ENCODE measurements at regions of chr19 and their contacts with region 1.

Region 1: GRCh38 chr19:47013041-47013517 is 6.6 kb upstream of the NPAS1 start:
- DNase-seq: peak; percentile 35 to 80 (median 58)
- ATAC-seq: peak; percentile 92
- H3K4me3 ChIP-seq: no peak overlapping the region
- H3K4me3 Mint-ChIP-seq: no peak overlapping the region
- H3K27ac ChIP-seq: no peak overlapping the region
- H3K27ac Mint-ChIP-seq: no peak overlapping the region
- H3K4me1 ChIP-seq: peaks cover 8% of the 10 kb centered on the region
- H3K4me1 Mint-ChIP-seq: peaks cover 8% of the 10 kb centered on the region
- H3K27me3 ChIP-seq: no peaks in the 10 kb centered on the region
- H3K27me3 Mint-ChIP-seq: peaks cover 10% of the 10 kb centered on the region
- CTCF ChIP-seq: peak; percentile 99

Region 2: DNA sequence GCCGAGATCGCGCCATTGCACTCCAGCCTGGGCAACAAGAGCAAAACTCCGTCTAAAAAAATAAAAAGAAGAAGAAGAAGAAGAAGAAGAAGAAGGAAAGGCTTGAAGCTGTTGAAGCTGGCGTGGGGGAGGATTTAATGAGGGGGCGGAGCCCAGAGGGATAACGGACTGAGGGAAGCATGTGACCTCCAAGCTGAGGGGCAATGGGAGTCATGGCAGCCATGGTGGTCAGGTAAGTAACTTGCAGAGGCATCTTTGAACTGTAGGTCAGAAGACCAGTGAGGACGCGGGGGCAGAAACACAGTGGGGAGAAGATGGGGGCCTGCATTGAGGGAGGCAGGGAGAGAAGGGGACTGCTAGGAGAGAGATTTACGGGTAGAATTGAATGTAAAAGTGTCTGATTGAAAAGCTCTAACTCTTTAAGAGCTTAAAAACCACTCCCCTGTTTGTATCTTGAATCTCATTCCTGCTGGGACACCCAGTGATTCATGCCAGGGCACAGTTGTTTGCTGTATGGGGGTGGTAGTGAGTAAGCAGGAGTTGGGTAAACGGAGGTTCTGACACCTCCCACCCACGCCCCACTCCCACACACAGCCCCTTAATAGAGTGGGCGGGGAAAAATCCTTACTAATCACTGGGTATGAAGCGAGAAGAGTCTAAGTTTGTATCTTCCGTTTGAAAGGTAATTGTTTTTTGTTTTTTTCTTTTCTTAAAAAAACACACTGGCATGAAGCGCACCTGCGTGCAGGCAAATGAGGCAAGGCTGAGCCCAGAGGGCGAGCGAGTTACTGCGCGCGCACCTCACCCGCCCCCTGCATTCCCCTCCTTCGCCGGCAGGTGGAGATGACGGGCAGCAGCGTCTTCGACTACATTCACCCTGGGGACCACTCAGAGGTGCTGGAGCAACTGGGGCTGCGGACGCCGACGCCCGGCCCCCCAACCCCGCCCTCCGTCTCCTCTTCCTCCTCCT is 22.3 kb after region 1 on chr19:
- CTCF ChIA-PET with region 1: interaction called, 10 read pairs
- POLR2A ChIA-PET with region 1: interaction called, 4 read pairs
- intact Hi-C with region 1: loop called in 1 of 2 experiments (anchors 1 kb)
- DNase-seq: peak; percentile 88 to 99 (median 95)
- ATAC-seq: peak; percentile 96
- H3K4me3 ChIP-seq: peak overlapping the region; percentile 51
- H3K4me3 Mint-ChIP-seq: peak overlapping the region; percentile 94
- H3K27ac ChIP-seq: no peak overlapping the region
- H3K27ac Mint-ChIP-seq: peak overlapping the region; percentile 85
- H3K4me1 ChIP-seq: peaks cover 30% of the 10 kb centered on the region
- H3K4me1 Mint-ChIP-seq: peaks cover 15% of the 10 kb centered on the region
- H3K27me3 ChIP-seq: peaks cover 4 to 5% of the 10 kb centered on the region in 2 experiments
- H3K27me3 Mint-ChIP-seq: peaks cover 23% of the 10 kb centered on the region
- CTCF ChIP-seq: peak; percentile 98

Region 3: GRCh38 chr19:47093254-47093653 is 80.2 kb after region 1 on chr19:
- CTCF ChIA-PET with region 1: no interaction called
- POLR2A ChIA-PET with region 1: no interaction called
- intact Hi-C with region 1: no loop called
- DNase-seq: no peak
- ATAC-seq: no peak
- H3K4me3 ChIP-seq: no peak overlapping the region
- H3K4me3 Mint-ChIP-seq: no peak overlapping the region
- H3K27ac ChIP-seq: peak overlapping the region in 1 of 2 donors; percentile 90
- H3K27ac Mint-ChIP-seq: peak overlapping the region; percentile 83
- H3K4me1 ChIP-seq: peaks cover 44% of the 10 kb centered on the region
- H3K4me1 Mint-ChIP-seq: peaks cover 35% of the 10 kb centered on the region
- H3K27me3 ChIP-seq: no peaks in the 10 kb centered on the region
- H3K27me3 Mint-ChIP-seq: no peaks in the 10 kb centered on the region
- CTCF ChIP-seq: no peak

Measured in CD4-positive, alpha-beta T cell (primary cell).